ENCODE measurements at regions of chr6 and their contacts with region 1.

Region 1: GRCh38 chr6:106163446-106163965 is 77.4 kb downstream of the PRDM1 start:
- DNase-seq: peak in 4 of 5 donors; percentile 34 to 75 (median 40)
- H3K4me3 ChIP-seq: peak overlapping the region; percentile 16
- H3K4me3 Mint-ChIP-seq: peak overlapping the region; percentile 51 to 75 (median 63)
- H3K27ac ChIP-seq: peak overlapping the region; percentile 65
- H3K27ac Mint-ChIP-seq: peak overlapping the region; percentile 79 to 98 (median 96)
- H3K4me1 ChIP-seq: peaks cover 26% of the 10 kb centered on the region
- H3K4me1 Mint-ChIP-seq: peaks cover 36 to 55% (median 51%) of the 10 kb centered on the region in 3 donors
- H3K27me3 ChIP-seq: no peaks in the 10 kb centered on the region
- H3K27me3 Mint-ChIP-seq: peaks cover 0 to 2% of the 10 kb centered on the region in 2 donors

Region 2: GRCh38 chr6:106141441-106142237 is 21.9 kb before region 1 on chr6:
- CTCF ChIA-PET with region 1: interaction called, 15 read pairs
- POLR2A ChIA-PET with region 1: interaction called, 6 read pairs
- DNase-seq: peak in 3 of 5 donors; percentile 27 to 54 (median 28)
- H3K4me3 ChIP-seq: peak overlapping the region; percentile 15
- H3K4me3 Mint-ChIP-seq: peak overlapping the region; percentile 48 to 89 (median 73)
- H3K27ac ChIP-seq: peak overlapping the region; percentile 28
- H3K27ac Mint-ChIP-seq: peak overlapping the region; percentile 73 to 95 (median 93)
- H3K4me1 ChIP-seq: peaks cover 39% of the 10 kb centered on the region
- H3K4me1 Mint-ChIP-seq: peaks cover 42 to 61% (median 60%) of the 10 kb centered on the region in 3 donors
- H3K27me3 ChIP-seq: no peaks in the 10 kb centered on the region
- H3K27me3 Mint-ChIP-seq: no peaks in the 10 kb centered on the region

Measured in CD8-positive, alpha-beta memory T cell (primary cell).